ENCODE measurements at regions of chr9 and their contacts with region 1.

Region 1: DNA sequence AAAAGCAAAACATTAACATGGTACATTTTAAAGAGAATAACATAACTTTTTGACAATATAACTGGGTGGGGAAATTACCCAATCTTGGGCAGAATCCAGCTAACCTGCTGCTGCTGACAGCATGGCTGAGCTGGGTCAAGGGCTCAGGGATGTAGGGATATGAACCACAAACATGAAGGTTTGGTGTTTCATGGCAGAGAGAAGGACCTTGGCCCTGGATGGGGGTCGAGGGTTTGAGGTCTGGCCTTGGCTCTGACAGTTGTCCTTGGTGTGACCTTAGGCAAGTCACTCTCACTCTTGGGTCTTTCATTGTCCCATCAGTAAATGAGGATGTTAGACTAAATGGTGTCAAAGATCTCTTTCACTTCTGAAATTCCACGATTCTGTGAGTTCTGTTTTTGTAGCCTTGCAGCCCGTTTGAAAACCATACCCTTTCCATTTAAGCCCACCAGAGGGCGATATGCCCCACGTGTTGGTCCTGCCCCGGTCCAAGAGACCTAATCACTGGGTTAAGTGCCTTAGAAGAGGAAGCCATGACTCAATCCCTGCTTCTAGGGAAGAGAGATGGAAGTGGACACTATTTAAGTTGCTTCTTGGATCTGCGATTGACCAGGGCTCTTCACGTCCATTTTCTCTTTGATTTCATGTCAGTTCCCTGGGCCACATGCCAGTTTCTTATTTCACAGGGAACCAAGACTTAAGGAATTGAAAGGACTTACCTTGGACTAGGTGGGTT is 56.8 kb upstream of the TEX48 start:
- DNase-seq: peak; percentile 41 to 81 (median 70)
- ATAC-seq: peak; percentile 97
- H3K4me3 ChIP-seq: no peak overlapping the region
- H3K4me3 Mint-ChIP-seq: peak overlapping the region in 4 of 10 donors; percentile 39 to 77 (median 52)
- H3K27ac ChIP-seq: no peak overlapping the region
- H3K27ac Mint-ChIP-seq: peak overlapping the region in 8 of 9 donors; percentile 26 to 88 (median 74)
- H3K4me1 ChIP-seq: peaks cover 30 to 34% of the 10 kb centered on the region in 2 donors
- H3K4me1 Mint-ChIP-seq: peaks cover 14 to 70% (median 33%) of the 10 kb centered on the region in 7 donors
- H3K27me3 ChIP-seq: no peaks in the 10 kb centered on the region
- H3K27me3 Mint-ChIP-seq: peaks cover 0 to 2% (median 0%) of the 10 kb centered on the region in 5 donors

Region 2: DNA sequence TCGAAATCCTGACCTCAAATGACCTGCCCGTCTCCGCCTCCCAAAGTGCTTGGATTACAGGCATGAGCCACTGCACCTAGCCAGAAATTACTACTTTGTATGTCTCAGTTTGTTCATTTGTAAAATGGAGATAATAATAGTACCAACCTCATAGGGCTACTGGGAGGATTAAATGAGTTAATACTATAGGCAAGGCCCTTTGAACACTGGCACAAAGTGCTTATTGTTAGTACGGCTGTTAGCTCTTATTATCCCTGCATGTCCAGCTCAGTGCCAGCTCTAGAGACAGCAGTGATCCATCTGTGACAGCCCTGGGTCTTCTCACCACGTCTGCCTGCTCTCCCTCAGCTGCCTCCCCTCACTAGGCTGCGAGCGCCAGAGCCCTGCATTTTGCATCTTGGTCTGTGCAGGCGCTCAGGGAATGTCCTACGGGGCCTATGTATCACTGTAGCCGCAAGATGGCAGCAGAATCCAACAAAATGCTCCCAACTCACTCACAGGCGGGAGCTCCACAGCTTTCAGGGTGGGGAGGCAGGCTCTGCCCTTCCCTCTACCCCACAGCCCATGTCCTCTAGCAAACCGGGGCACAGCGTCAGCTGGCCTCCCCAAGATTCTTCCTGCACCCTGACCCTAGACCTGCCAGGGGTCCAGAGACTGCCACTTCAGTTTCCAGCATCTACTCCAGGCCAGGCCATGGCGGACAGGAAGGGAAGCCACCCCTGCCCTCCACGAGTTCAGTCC is 333.3 kb before region 1 on chr9:
- CTCF ChIA-PET with region 1: no interaction called
- POLR2A ChIA-PET with region 1: no interaction called
- intact Hi-C with region 1: loop called in 1 of 2 experiments (anchors 5 kb)
- DNase-seq: peak; percentile 56 to 84 (median 80)
- ATAC-seq: peak; percentile 97
- H3K4me3 ChIP-seq: no peak overlapping the region
- H3K4me3 Mint-ChIP-seq: no peak overlapping the region
- H3K27ac ChIP-seq: no peak overlapping the region
- H3K27ac Mint-ChIP-seq: peak overlapping the region in 6 of 9 donors; percentile 16 to 91 (median 60)
- H3K4me1 ChIP-seq: peaks cover 4 to 11% of the 10 kb centered on the region in 2 donors
- H3K4me1 Mint-ChIP-seq: peaks cover 6 to 10% (median 6%) of the 10 kb centered on the region in 7 donors
- H3K27me3 ChIP-seq: no peaks in the 10 kb centered on the region
- H3K27me3 Mint-ChIP-seq: no peaks in the 10 kb centered on the region

Region 3: GRCh38 chr9:114487607-114488300 is 251.0 kb before region 1 on chr9:
- CTCF ChIA-PET with region 1: no interaction called
- POLR2A ChIA-PET with region 1: no interaction called
- intact Hi-C with region 1: no loop called
- DNase-seq: peak; percentile 25 to 80 (median 62)
- ATAC-seq: peak; percentile 92
- H3K4me3 ChIP-seq: no peak overlapping the region
- H3K4me3 Mint-ChIP-seq: no peak overlapping the region
- H3K27ac ChIP-seq: no peak overlapping the region
- H3K27ac Mint-ChIP-seq: peak overlapping the region in 2 of 9 donors; percentile 8 to 57
- H3K4me1 ChIP-seq: peaks cover 0 to 9% of the 10 kb centered on the region in 2 donors
- H3K4me1 Mint-ChIP-seq: peaks cover 0 to 30% (median 0%) of the 10 kb centered on the region in 7 donors
- H3K27me3 ChIP-seq: no peaks in the 10 kb centered on the region
- H3K27me3 Mint-ChIP-seq: peaks cover 0 to 4% (median 0%) of the 10 kb centered on the region in 5 donors

Region 4: GRCh38 chr9:114691046-114691955 is 47.4 kb before region 1 on chr9:
- CTCF ChIA-PET with region 1: interaction called, 5 read pairs
- POLR2A ChIA-PET with region 1: no interaction called
- intact Hi-C with region 1: loop called in 1 of 2 experiments (anchors 2 kb)
- DNase-seq: peak in 5 of 9 donors; percentile 4 to 66 (median 6)
- ATAC-seq: peak; percentile 84
- H3K4me3 ChIP-seq: peak overlapping the region; percentile 2
- H3K4me3 Mint-ChIP-seq: peak overlapping the region in 8 of 10 donors; percentile 0 to 66 (median 12)
- H3K27ac ChIP-seq: no peak overlapping the region
- H3K27ac Mint-ChIP-seq: peak overlapping the region in 4 of 9 donors; percentile 64 to 91 (median 80)
- H3K4me1 ChIP-seq: peaks cover 0 to 24% of the 10 kb centered on the region in 2 donors
- H3K4me1 Mint-ChIP-seq: peaks cover 6 to 90% (median 12%) of the 10 kb centered on the region in 7 donors
- H3K27me3 ChIP-seq: no peaks in the 10 kb centered on the region
- H3K27me3 Mint-ChIP-seq: no peaks in the 10 kb centered on the region

Region 5: GRCh38 chr9:114718801-114719221 is 19.9 kb before region 1 on chr9:
- CTCF ChIA-PET with region 1: interaction called, 4 read pairs
- POLR2A ChIA-PET with region 1: no interaction called
- intact Hi-C with region 1: loop called in 1 of 2 experiments (anchors 1 kb)
- DNase-seq: peak in 5 of 9 donors; percentile 8 to 91 (median 18)
- ATAC-seq: peak; percentile 76
- H3K4me3 ChIP-seq: no peak overlapping the region
- H3K4me3 Mint-ChIP-seq: peak overlapping the region in 9 of 10 donors; percentile 0 to 75 (median 19)
- H3K27ac ChIP-seq: no peak overlapping the region
- H3K27ac Mint-ChIP-seq: peak overlapping the region in 6 of 9 donors; percentile 12 to 97 (median 64)
- H3K4me1 ChIP-seq: peaks cover 14 to 34% of the 10 kb centered on the region in 2 donors
- H3K4me1 Mint-ChIP-seq: peaks cover 10 to 88% (median 20%) of the 10 kb centered on the region in 7 donors
- H3K27me3 ChIP-seq: no peaks in the 10 kb centered on the region
- H3K27me3 Mint-ChIP-seq: no peaks in the 10 kb centered on the region

Region 6: DNA sequence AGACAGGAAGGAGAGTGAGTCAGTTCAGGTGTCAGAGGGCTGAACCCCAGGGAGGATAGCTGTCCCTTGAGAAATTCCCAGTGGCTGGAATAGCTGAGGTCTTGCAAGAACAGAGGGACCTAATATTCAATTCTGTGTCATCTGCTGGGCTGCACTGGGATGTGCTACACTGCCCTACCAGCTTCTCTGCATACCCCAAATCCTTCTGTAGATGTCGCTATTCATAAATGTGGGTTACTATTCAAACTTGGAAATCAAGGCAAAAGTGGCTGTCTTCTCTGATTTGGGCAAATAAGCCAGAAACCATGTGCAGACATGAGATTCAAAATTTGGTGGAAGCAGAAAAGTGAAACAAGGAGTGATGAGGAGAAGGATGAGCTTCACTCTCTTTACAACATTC is 175.4 kb after region 1 on chr9:
- CTCF ChIA-PET with region 1: interaction called, 151 read pairs
- POLR2A ChIA-PET with region 1: interaction called, 3 read pairs
- intact Hi-C with region 1: no loop called
- DNase-seq: no peak
- ATAC-seq: no peak
- H3K4me3 ChIP-seq: no peak overlapping the region
- H3K4me3 Mint-ChIP-seq: peak overlapping the region in 2 of 10 donors; percentile 3 to 10
- H3K27ac ChIP-seq: no peak overlapping the region
- H3K27ac Mint-ChIP-seq: peak overlapping the region in 5 of 9 donors; percentile 42 to 69 (median 65)
- H3K4me1 ChIP-seq: peaks cover 22 to 27% of the 10 kb centered on the region in 2 donors
- H3K4me1 Mint-ChIP-seq: peaks cover 29 to 100% (median 93%) of the 10 kb centered on the region in 7 donors
- H3K27me3 ChIP-seq: no peaks in the 10 kb centered on the region
- H3K27me3 Mint-ChIP-seq: no peaks in the 10 kb centered on the region

Region 7: DNA sequence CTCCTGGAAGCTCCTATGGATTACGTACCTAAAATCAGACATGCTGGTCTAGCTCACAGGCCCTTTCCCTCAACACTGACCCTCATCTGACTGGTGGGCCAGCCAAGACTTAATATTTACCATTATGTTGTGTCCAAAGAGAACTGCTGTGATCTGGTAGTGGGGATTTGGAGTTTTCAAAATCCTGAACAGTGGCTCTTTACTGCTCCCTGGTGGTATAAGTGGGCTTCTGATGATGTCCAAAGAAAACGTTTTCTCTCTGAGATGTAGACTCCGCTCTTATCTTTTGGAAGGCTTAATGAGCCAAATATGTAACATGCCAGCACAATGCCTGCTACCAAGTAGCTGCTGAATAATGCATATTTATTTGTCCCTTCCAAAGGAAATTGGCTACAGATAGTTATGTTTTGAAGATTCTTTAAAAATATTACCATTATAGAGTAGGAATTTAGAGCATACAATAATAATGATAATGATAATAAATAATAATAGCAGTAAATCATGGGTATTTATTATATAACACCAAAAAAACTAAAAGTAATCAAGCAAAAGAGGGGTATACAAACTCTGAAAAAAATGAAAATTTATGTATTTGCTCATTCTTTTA is 785.8 kb after region 1 on chr9:
- CTCF ChIA-PET with region 1: no interaction called
- POLR2A ChIA-PET with region 1: no interaction called
- intact Hi-C with region 1: loop called in 1 of 2 experiments (anchors 2 kb)
- DNase-seq: peak in 4 of 9 donors; percentile 4 to 16 (median 8)
- ATAC-seq: no peak
- H3K4me3 ChIP-seq: no peak overlapping the region
- H3K4me3 Mint-ChIP-seq: no peak overlapping the region
- H3K27ac ChIP-seq: no peak overlapping the region
- H3K27ac Mint-ChIP-seq: no peak overlapping the region
- H3K4me1 ChIP-seq: no peaks in the 10 kb centered on the region
- H3K4me1 Mint-ChIP-seq: no peaks in the 10 kb centered on the region
- H3K27me3 ChIP-seq: no peaks in the 10 kb centered on the region
- H3K27me3 Mint-ChIP-seq: peaks cover 12 to 35% (median 18%) of the 10 kb centered on the region in 5 donors

Measured in naive thymus-derived CD4-positive, alpha-beta T cell (primary cell).